Activated T-helper 2 cell treated with anti-CD3 and anti-CD28 coated beads, Interferon-gamma antibody, Interleukin-2, Interleukin-4, amounts not matched to agents 10 μg/mL and 5 μg/mL and 100 μg/mL, durations not matched to agents 14 hours and 24 hours and 36 hours (primary cell): ENCODE measurements at regions of chr5 and their contacts with region 1.

Region 1: GRCh38 chr5:156920042-156920860 is 42.8 kb downstream of the TIMD4 start:
- DNase-seq: peak; percentile 39
- H3K4me3 Mint-ChIP-seq: peak overlapping the region; percentile 64
- H3K27ac Mint-ChIP-seq: peak overlapping the region; percentile 89
- H3K4me1 Mint-ChIP-seq: peaks cover 57% of the 10 kb centered on the region
- H3K27me3 Mint-ChIP-seq: no peaks in the 10 kb centered on the region

Region 2: DNA sequence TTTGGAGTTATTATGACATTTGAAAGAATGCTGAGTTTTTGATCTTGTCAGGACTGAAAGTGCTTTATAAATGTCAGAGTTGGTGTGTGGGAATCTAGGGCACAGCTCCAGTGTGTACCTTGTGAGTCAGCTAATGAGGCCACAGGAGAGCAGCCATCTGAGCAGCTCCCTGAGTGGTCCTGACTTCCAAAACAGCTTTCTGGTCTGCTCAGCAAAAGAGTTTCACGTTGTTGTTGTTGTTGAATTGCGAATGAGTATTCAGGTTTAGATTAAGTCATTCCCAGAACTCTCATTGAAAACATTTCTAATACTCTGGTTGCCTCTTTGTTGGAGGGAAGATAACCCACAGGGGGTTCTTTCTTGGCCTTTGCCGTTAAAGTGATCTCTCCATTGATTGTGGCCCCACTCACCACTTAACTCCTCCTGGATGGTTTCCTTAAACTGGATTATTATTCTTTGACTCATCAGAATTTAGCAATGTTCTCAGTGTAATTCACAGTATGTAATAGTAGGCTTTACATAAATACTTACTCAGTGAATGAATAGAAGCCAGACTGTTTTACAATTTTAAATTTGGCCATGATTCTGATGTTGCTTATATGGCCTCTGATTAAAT is 718.4 kb before region 1 on chr5:
- intact Hi-C with region 1: no loop called
- DNase-seq: no peak
- H3K4me3 Mint-ChIP-seq: no peak overlapping the region
- H3K27ac Mint-ChIP-seq: no peak overlapping the region
- H3K4me1 Mint-ChIP-seq: no peaks in the 10 kb centered on the region
- H3K27me3 Mint-ChIP-seq: no peaks in the 10 kb centered on the region

Region 3: GRCh38 chr5:156870498-156870839 is 49.8 kb before region 1 on chr5:
- intact Hi-C with region 1: loop called (anchors 2 kb)
- DNase-seq: no peak
- H3K4me3 Mint-ChIP-seq: no peak overlapping the region
- H3K27ac Mint-ChIP-seq: no peak overlapping the region
- H3K4me1 Mint-ChIP-seq: peaks cover 17% of the 10 kb centered on the region
- H3K27me3 Mint-ChIP-seq: no peaks in the 10 kb centered on the region

Region 4: GRCh38 chr5:156942064-156942463 is 21.8 kb after region 1 on chr5:
- intact Hi-C with region 1: loop called (anchors 1 kb)
- DNase-seq: no peak
- H3K4me3 Mint-ChIP-seq: no peak overlapping the region
- H3K27ac Mint-ChIP-seq: peak overlapping the region; percentile 81
- H3K4me1 Mint-ChIP-seq: peaks cover 33% of the 10 kb centered on the region
- H3K27me3 Mint-ChIP-seq: no peaks in the 10 kb centered on the region

Region 5: DNA sequence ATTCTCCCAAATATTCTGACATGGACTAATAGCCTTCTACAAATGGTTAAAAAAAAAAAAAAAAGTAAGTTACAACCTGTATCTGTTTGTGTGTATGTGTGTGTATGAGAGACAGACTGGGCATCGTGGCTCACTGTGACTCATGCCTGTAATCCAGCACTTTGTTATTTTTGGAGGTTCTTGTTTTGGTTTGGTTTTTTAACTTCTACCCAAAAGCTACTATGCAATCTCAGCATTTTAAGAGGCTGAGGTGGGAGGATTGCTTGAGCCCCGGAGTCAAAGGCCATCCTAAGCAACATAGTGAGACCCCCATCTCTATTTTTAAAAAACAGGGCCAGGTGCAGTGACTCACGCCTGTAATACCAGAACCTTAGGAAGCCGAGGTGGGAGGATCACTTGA is 156.3 kb after region 1 on chr5:
- intact Hi-C with region 1: loop called (anchors 1 kb)
- DNase-seq: no peak
- H3K4me3 Mint-ChIP-seq: no peak overlapping the region
- H3K27ac Mint-ChIP-seq: no peak overlapping the region
- H3K4me1 Mint-ChIP-seq: peaks cover 37% of the 10 kb centered on the region
- H3K27me3 Mint-ChIP-seq: no peaks in the 10 kb centered on the region

Region 6: GRCh38 chr5:157108976-157109375 is 188.7 kb after region 1 on chr5 and contains the start of gene HAVCR2:
- intact Hi-C with region 1: loop called (anchors 2 kb)
- DNase-seq: peak; percentile 63
- H3K4me3 Mint-ChIP-seq: peak within 1 kb of the TSS; percentile 88
- H3K27ac Mint-ChIP-seq: peak within 1 kb of the TSS; percentile 99
- H3K4me1 Mint-ChIP-seq: peaks cover 57% of the 10 kb centered on the region
- H3K27me3 Mint-ChIP-seq: no peaks in the 10 kb centered on the region
- total RNA-seq, gene HAVCR2: 48.6 and 50.5 TPM in 2 replicates

Region 7: GRCh38 chr5:157219491-157220271 is 299.4 kb after region 1 on chr5:
- intact Hi-C with region 1: loop called (anchors 2 kb)
- DNase-seq: no peak
- H3K4me3 Mint-ChIP-seq: peak overlapping the region; percentile 40
- H3K27ac Mint-ChIP-seq: peak overlapping the region; percentile 94
- H3K4me1 Mint-ChIP-seq: peaks cover 79% of the 10 kb centered on the region
- H3K27me3 Mint-ChIP-seq: no peaks in the 10 kb centered on the region

Region 8: GRCh38 chr5:157596487-157596886 is 676.2 kb after region 1 on chr5:
- intact Hi-C with region 1: loop called (anchors 5 kb)
- DNase-seq: peak; percentile 49
- H3K4me3 Mint-ChIP-seq: no peak overlapping the region
- H3K27ac Mint-ChIP-seq: peak overlapping the region; percentile 21
- H3K4me1 Mint-ChIP-seq: peaks cover 90% of the 10 kb centered on the region
- H3K27me3 Mint-ChIP-seq: no peaks in the 10 kb centered on the region